ENCODE measurements at regions of chr22 and their contacts with region 1.

Region 1: GRCh38 chr22:20418211-20418788 is 19.3 kb downstream of the SCARF2 start:
- DNase-seq: peak; percentile 88 to 95
- ATAC-seq: peak; percentile 95
- H3K4me3 ChIP-seq: no peak overlapping the region
- H3K27ac ChIP-seq: no peak overlapping the region
- H3K4me1 ChIP-seq: no peaks in the 10 kb centered on the region
- H3K27me3 ChIP-seq: no peaks in the 10 kb centered on the region

Region 2: GRCh38 chr22:20437613-20438426 is 19.5 kb after region 1 on chr22 and contains the start of gene SCARF2:
- intact Hi-C with region 1: loop called in 1 of 2 experiments (anchors 2 kb)
- DNase-seq: peak; percentile 77 to 91
- ATAC-seq: peak; percentile 77
- H3K4me3 ChIP-seq: peak within 1 kb of the TSS; percentile 67 to 83
- H3K27ac ChIP-seq: peak within 1 kb of the TSS; percentile 30 to 85
- H3K4me1 ChIP-seq: no peaks in the 10 kb centered on the region
- H3K27me3 ChIP-seq: no peaks in the 10 kb centered on the region
- total RNA-seq, gene SCARF2: 34.3 to 35.4 TPM

Region 3: GRCh38 chr22:20456064-20456721 is 37.9 kb after region 1 on chr22:
- intact Hi-C with region 1: loop called (anchors 1 kb)
- DNase-seq: peak; percentile 82 to 88
- ATAC-seq: peak; percentile 87
- H3K4me3 ChIP-seq: no peak overlapping the region
- H3K27ac ChIP-seq: no peak overlapping the region
- H3K4me1 ChIP-seq: no peaks in the 10 kb centered on the region
- H3K27me3 ChIP-seq: no peaks in the 10 kb centered on the region

Region 4: GRCh38 chr22:20495861-20496681 is 77.8 kb after region 1 on chr22:
- intact Hi-C with region 1: loop called (anchors 1 to 2 kb)
- DNase-seq: peak; percentile 95 to 97
- ATAC-seq: peak; percentile 98
- H3K4me3 ChIP-seq: peak overlapping the region; percentile 61 to 67
- H3K27ac ChIP-seq: peak overlapping the region; percentile 39 to 90
- H3K4me1 ChIP-seq: no peaks in the 10 kb centered on the region
- H3K27me3 ChIP-seq: no peaks in the 10 kb centered on the region

Region 5: GRCh38 chr22:20531315-20532201 is 113.3 kb after region 1 on chr22:
- intact Hi-C with region 1: no loop called
- DNase-seq: peak; percentile 84 to 87
- ATAC-seq: peak; percentile 84
- H3K4me3 ChIP-seq: no peak overlapping the region
- H3K27ac ChIP-seq: peak overlapping the region; percentile 78 to 91
- H3K4me1 ChIP-seq: no peaks in the 10 kb centered on the region
- H3K27me3 ChIP-seq: no peaks in the 10 kb centered on the region

Measured in aorta (tissue), 5 donors.